Right ventricle myocardium inferior (tissue), 1 donor: ENCODE measurements at regions of chr5 and their contacts with region 1.

Region 1: GRCh38 chr5:102754767-102755431 is at the start of gene PAM:
- DNase-seq: peak; percentile 92
- ATAC-seq: peak; percentile 94
- total RNA-seq, gene PAM: 959 TPM

Region 2: GRCh38 chr5:102718819-102719218 is 36.1 kb before region 1 on chr5:
- intact Hi-C with region 1: no loop called
- DNase-seq: no peak
- ATAC-seq: no peak

Region 3: DNA sequence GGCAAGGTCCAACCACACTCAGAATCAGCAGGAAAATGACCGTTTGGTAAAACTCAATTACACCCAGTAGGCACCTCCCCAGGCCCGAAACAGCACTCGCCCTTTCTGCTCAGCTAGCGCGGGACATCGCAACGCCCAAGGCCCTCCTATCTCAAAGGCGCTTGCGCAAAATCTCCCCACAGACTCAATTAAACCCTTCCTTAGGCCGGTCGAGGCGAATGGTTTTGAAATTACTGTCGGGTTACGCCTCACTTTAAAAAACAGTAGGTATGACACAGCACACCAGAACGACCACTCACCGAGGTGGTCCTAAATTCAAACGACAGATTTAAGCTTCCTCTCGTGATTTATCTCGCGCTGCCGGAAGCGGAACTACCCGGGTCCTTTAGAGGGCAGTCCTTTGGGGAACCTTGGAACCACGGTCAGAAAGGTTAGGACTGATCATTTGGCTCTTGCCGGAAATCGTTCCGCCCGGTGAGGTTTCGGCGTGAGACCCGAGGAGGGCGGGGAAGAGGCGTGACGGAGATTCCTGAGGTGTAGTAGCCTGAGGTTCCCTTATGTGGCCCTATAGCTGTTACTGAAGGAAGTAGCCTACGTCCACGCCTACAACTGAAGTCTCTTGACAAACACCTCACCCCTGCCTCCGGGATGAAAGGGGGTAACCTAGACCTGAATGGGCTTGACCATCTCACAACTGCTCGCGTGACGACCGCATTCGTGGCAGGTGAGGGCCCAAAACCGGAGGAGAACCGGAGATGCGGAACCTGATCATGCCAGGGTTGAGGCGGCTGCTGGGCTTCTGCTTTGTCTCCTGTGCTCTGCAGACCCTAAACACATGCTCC is 365.1 kb after region 1 on chr5 and contains the starts of genes GIN1 and PPIP5K2:
- intact Hi-C with region 1: loop called (anchors 10 kb)
- DNase-seq: peak; percentile 97
- ATAC-seq: peak; percentile 99
- total RNA-seq, gene GIN1: 17.1 TPM
- total RNA-seq, gene PPIP5K2: 49.4 TPM